Keratinocyte (primary cell): ENCODE measurements at regions of chr10 and their contacts with region 1.

Region 1: DNA sequence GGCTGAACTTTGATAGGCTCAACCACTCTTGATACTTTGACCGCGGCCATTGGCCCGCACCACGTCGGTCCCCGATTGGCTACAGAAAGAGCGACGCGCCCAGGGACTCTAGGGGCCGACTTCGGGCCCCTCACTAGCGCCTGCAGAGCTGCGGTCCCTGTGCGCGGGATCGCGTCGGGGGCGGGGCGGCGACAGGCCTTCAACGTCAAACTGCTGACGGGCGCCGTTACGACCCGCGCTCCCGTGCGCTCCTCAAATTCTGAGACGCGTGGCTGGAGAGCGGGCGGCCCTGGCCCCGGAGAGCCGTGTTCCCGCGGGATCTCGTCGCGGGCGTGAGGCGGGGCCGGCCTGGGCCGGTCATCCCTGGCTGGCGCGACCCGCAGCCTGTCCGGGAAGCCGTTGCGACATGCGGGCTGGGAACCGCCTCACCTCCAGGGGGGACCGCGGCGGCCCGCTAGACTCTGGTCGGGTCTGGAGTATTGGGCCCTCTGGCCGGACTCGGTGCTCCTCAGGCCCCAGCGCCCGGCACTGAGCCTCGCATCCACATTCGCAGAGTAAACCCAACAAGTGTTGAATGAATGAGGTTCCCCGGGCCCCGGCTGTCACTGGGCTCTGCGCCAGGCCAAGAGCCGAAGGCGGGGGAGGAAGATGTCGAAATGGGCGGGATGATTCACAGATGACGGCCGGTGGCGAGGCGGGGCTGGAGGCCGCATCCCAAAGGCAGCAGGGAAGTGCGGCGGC is 644 bp upstream of the SLC25A28 start:
- DNase-seq: peak; percentile 48
- H3K4me3 ChIP-seq: peak overlapping the region; percentile 58 to 81 (median 76)
- H3K27ac ChIP-seq: peak overlapping the region; percentile 99
- H3K4me1 ChIP-seq: peaks cover 27% of the 10 kb centered on the region
- H3K27me3 ChIP-seq: no peaks in the 10 kb centered on the region
- CTCF ChIP-seq: no peak

Region 2: DNA sequence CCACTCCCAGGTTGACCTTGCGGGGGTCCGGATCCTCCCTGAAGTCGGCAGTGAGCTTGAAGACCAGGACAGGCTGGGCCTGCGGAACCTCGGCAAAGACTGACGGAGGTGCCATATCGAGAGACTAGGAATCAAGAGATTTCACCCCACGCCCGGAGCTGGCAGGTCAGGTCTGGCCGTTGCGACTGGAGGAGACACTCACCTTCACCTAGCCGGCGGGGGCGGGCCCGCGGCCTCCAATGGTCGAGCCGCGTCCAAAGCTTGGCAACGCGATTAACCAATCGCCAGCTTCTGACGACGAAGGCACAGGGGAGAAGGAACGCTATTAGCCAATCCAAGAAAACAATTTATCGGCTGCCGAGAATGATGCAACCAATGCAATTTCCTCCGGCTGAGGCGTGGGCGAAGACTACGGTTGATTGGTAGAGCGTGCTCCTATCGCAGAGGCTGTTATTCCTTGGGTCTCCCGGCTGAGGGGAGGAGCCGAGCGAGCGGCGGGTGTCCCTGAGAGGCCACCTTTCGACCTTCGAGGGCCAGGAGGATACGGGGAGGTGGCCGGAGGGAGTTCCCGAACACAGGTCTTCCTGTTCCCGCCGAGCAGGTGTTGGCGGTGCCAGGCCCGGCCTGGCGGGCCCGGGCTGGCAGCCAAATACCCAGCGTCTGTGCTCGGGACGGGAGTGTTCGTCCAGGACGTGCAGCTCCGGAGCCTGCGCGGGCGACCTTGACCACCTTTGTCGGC is 190.3 kb before region 1 on chr10 and contains the start of gene GOT1:
- dilution Hi-C with region 1: loop called (anchors 25 kb)
- DNase-seq: peak; percentile 79
- H3K4me3 ChIP-seq: peak within 1 kb of the TSS; percentile 90 to 99 (median 94)
- H3K27ac ChIP-seq: peak within 1 kb of the TSS; percentile 91
- H3K4me1 ChIP-seq: peaks cover 5% of the 10 kb centered on the region
- H3K27me3 ChIP-seq: no peaks in the 10 kb centered on the region
- CTCF ChIP-seq: no peak
- polyA plus RNA-seq, gene GOT1: 27.0 to 33.3 TPM (median 30.9 TPM) in 3 replicates

Region 3: GRCh38 chr10:99766302-99766681 is 145.4 kb after region 1 on chr10:
- dilution Hi-C with region 1: no loop called
- DNase-seq: no peak
- H3K4me3 ChIP-seq: no peak overlapping the region
- H3K27ac ChIP-seq: no peak overlapping the region
- H3K4me1 ChIP-seq: no peaks in the 10 kb centered on the region
- H3K27me3 ChIP-seq: no peaks in the 10 kb centered on the region
- CTCF ChIP-seq: no peak